Vagina (tissue), 2 donors: ENCODE measurements at regions of chr11 and their contacts with region 1.

Region 1: DNA sequence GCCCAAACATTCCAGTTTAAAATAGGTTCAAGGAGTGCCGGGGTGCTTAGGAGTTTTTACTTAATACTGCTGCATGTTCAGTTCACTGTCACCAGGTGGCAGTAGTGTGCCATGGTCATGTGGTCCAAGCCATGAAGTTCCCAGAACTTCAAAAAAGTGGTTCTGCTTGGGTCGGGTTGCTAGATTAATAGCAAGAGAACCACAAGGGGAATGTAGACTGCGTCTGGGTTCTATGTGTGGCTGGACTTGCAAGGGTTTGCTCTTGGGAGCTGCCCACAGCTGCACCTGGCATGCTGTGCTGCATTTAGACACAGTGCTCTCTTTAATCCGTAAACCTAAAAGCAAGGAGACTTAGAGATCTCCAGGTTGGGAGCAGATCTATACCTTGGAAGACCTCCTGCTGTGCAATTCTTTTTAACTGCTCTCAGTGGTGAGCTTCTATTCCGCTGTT is 6.5 kb upstream of the SPON1 start:
- DNase-seq: peak in 1 of 2 donors; percentile 86
- H3K4me3 ChIP-seq: no peak overlapping the region
- H3K27ac ChIP-seq: no peak overlapping the region
- H3K4me1 ChIP-seq: no peaks in the 10 kb centered on the region
- H3K27me3 ChIP-seq: peaks cover 2% of the 10 kb centered on the region
- CTCF ChIP-seq: peak; percentile 92 to 94 (median 94)
- POLR2A ChIP-seq: no peak

Region 2: DNA sequence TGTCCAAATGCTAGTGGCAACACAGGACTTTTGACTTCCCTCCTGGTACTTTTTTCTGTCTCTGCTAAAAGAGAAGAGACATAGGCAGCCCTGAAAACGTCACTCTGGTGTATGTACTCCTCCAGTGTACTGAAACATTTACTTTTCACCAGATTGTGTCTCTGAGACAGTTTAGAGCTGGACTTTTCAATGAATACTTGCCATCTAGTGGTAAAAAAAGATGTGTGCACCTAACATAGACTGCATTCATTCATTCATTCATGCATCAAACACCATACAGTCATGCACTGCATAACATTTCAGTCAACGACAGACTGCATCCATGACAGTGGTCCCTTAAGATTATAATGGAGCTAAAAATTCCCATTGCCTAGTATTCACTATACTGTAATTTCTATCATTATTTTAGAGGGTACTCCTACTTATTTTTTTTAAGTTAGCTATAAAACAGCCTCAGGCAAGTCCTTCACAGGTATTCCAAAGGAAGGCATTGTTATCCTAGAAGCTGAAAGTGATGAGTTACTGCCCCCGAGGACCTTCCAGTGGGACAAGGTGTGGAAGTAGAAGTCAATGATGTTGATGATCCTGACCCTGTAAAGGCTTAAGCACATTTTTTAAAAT is 192.8 kb after region 1 on chr11:
- intact Hi-C with region 1: loop called (anchors 10 kb)
- DNase-seq: no peak
- H3K4me3 ChIP-seq: no peak overlapping the region
- H3K27ac ChIP-seq: no peak overlapping the region
- H3K4me1 ChIP-seq: no peaks in the 10 kb centered on the region
- H3K27me3 ChIP-seq: no peaks in the 10 kb centered on the region
- CTCF ChIP-seq: peak in 2 of 3 experiments; percentile 22 to 52
- POLR2A ChIP-seq: no peak

Region 3: DNA sequence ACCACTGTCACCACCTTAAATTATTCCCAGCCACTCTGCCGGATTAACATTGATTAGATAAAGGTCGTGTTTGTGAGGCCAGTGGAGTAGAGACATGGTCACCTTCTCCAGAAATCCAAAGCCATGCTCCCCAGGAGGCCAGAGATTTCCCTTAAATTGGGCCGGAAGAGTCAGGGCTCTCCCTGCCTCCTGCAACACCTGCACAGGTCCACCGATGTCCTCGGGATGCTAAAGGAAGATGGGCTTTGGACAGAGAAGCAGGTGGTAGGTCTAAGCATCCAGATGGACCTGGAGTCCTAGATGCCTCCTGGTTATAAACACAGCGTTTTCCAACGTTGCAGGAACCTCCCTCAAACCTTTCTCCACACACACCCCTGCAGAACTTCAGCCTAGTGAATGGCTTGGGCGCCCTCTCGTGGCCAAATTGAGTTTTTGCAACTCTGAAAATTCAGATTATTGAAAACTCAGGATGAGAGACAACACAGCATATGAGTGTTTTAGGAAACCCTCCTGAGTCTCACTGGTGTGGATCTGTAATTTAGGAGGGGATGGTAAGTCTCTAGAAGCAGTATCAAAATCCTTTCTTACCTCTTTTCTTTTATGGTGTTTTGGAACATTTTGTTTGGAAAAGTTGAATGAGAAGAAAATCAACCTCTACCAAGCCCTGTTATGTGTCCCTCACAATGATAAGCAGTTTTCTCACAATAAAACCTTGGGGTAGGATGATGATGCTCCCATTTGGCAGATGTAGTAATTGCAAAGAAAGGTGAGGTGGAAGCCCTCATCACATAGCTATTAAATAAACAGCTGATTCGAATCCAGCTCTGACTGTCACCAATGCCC is 293.3 kb after region 1 on chr11:
- intact Hi-C with region 1: loop called (anchors 2 kb)
- DNase-seq: no peak
- H3K4me3 ChIP-seq: no peak overlapping the region
- H3K27ac ChIP-seq: no peak overlapping the region
- H3K4me1 ChIP-seq: peaks cover 11% of the 10 kb centered on the region
- H3K27me3 ChIP-seq: no peaks in the 10 kb centered on the region
- CTCF ChIP-seq: peak; percentile 72 to 87 (median 82)
- POLR2A ChIP-seq: no peak